ENCODE measurements at regions of chr3 and their contacts with region 1.

Region 1: DNA sequence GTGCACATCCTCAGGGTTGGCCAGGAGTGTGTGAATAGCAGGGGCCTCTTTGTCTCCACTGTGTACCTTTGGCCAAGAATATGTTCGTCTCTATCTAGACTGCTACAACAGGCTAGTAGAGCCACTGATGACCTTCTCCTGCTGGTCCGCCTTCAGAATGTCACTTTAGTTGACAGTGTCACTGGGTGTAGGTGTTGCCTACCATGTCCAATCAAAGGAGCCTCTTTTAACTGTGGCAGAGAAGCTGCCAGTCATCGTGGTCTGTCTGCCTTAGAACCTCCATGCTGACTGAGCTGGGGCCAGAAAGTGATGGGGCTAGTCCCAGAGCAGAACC is 40.1 kb downstream of the OXSR1 start:
- H3K4me3 Mint-ChIP-seq: no peak overlapping the region
- H3K27ac Mint-ChIP-seq: no peak overlapping the region
- H3K4me1 Mint-ChIP-seq: peaks cover 30% of the 10 kb centered on the region
- H3K27me3 Mint-ChIP-seq: no peaks in the 10 kb centered on the region

Region 2: GRCh38 chr3:38222032-38222634 is 16.7 kb after region 1 on chr3:
- intact Hi-C with region 1: loop called (anchors 2 kb)
- H3K4me3 Mint-ChIP-seq: no peak overlapping the region
- H3K27ac Mint-ChIP-seq: no peak overlapping the region
- H3K4me1 Mint-ChIP-seq: peaks cover under 1% of the 10 kb centered on the region
- H3K27me3 Mint-ChIP-seq: no peaks in the 10 kb centered on the region

Measured in dendritic cell treated with granulocyte-macrophage colony-stimulating factor and Interleukin-4, amounts not matched to agents 40 ng/mL and 50 ng/mL, for 4 days (primary cell).